GM23248 (cell line): ENCODE measurements at regions of chr13 and their contacts with region 1.

Region 1: DNA sequence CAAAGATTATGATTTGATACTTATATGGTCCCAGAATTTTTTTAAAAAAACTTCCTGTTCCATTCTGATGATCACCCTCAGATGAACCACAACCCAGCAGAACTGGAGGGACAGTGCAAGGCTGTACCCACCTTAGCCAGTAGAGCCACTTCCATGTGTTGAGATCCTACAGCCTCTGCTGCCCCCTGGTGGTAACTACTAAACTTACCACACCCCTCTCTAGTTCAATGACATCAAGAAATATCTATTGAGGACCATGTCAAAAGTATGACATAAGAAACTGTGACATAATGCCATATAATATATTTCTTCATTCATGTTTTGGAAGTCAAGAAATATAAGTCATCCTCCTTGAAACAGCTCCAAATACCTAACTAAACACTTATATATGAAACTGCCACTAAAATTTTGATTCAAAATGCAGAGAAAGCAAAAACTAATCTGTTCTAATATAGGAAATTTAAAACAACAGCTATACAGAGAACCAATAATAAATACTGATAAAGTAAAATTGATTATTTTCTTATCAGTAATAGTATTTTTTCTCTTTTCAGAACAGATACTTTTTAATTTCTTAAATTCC is 412.6 kb downstream of the KCTD12 start:
- DNase-seq: peak; percentile 79
- H3K4me3 ChIP-seq: no peak overlapping the region
- H3K27ac ChIP-seq: no peak overlapping the region
- H3K4me1 ChIP-seq: no peaks in the 10 kb centered on the region
- H3K27me3 ChIP-seq: peaks cover 18% of the 10 kb centered on the region

Region 2: DNA sequence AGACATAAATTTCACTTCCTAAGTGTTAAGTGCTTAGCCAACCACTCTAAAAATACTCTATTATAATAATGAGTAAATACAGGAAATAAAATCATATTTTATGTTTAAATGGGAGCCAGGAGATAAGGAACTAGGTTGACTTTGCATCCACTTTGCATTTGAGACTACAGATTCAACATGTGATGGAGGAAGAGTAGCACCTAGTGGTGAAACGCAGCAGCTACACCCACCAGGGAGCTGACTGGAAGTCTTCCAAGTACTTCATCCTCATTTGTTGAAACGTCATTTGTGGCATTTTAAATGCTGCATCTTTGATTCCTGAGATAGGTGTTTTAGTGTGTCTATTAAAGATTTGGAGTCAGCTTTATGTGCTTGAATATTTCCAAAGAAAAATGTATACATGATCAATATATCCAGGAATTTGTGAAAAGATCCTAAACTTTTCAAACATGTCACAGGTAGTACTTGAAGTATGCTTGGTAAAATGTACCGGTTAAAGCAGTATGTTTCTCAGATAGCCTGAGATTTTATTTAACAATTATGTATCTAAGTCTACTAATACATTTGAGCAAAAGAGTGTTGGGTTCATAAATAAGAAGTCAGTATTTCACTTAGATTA is 430.0 kb after region 1 on chr13:
- in situ Hi-C with region 1: loop called (anchors 10 kb)
- DNase-seq: peak; percentile 83
- H3K4me3 ChIP-seq: no peak overlapping the region
- H3K27ac ChIP-seq: no peak overlapping the region
- H3K4me1 ChIP-seq: no peaks in the 10 kb centered on the region
- H3K27me3 ChIP-seq: peaks cover 7% of the 10 kb centered on the region; the same call in 1 of the 2 replicates